Calu3 (cell line): ENCODE measurements at regions of chr14 and their contacts with region 1.

Region 1: DNA sequence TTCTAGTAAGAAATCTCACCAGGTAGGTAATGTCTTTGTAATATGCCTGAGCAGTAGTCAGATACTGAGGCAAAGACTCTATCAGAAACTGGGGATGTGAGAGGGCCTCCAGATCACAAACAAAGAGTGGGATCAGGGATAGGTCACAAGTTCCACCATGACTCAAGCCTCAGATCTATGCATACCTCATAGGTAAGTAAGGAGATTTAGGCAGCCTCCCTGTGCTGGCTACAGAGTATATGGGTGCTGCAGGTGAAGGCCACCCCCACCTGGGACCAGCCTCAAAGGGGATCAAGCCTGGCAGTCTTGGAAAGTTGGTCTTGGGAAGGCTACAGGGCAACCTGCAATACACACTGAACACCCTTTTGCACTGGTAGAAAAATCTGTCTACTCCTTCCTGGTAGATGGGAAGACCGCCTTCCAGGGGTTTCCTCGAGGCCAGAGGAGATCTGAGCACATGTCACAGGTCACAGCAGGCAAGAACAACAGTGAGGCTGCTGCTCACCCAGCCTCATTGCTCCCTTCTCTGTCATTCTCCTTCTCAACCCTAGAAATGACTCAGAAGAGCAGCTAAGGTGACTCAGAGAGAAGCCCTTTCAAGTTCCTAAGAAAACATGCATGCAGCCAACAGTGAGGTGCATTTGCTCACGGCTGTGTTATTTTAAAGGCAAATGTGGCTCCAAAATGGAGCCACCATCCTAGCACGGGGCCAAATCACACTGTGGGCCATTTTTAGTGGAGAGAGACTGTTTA is 143.4 kb upstream of the CDKN3 start:
- DNase-seq: peak; percentile 14
- H3K4me3 Mint-ChIP-seq: no peak overlapping the region
- H3K27ac Mint-ChIP-seq: no peak overlapping the region
- H3K4me1 Mint-ChIP-seq: peaks cover 50% of the 10 kb centered on the region
- H3K27me3 Mint-ChIP-seq: no peaks in the 10 kb centered on the region
- CTCF ChIP-seq: no peak

Region 2: GRCh38 chr14:54189748-54190354 is 63.5 kb before region 1 on chr14:
- CTCF ChIA-PET with region 1: no interaction called
- intact Hi-C with region 1: loop called (anchors 10 kb)
- DNase-seq: peak; percentile 23
- H3K4me3 Mint-ChIP-seq: no peak overlapping the region
- H3K27ac Mint-ChIP-seq: no peak overlapping the region
- H3K4me1 Mint-ChIP-seq: no peaks in the 10 kb centered on the region
- H3K27me3 Mint-ChIP-seq: no peaks in the 10 kb centered on the region
- CTCF ChIP-seq: no peak

Region 3: DNA sequence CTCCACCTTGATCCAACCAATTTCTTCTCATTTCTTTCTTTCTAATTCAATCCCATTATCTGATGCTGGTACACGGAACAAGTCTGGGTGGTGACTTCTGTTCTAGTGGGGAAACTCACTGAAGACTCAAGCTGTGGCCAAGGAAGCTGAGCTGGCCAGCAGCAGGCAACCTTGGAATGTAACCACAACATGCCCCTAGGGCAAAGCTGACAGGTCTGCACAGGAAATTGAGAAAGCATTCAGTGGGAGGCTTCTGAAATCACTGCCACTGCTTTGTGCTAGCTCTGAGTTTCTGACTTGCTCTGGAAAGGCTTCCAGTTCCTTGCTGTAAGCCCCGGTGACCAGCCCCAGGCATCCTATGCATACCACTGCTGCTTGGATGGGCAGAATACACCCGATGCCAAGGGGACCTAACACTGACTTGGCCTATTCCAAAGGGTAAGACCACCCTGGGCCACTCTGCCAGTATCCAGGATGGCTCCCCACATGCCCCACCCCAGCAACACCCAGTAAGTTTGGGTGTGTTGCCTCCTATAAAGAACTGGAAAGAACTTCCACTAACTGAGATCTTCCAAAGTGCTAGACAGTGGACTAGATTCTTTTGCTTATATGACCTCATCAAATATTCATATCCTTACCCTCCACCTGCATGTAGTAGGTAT is 58.9 kb after region 1 on chr14:
- CTCF ChIA-PET with region 1: interaction called, 5 read pairs
- intact Hi-C with region 1: loop called (anchors 5 kb)
- DNase-seq: peak; percentile 78
- H3K4me3 Mint-ChIP-seq: no peak overlapping the region
- H3K27ac Mint-ChIP-seq: no peak overlapping the region
- H3K4me1 Mint-ChIP-seq: peaks cover 17% of the 10 kb centered on the region
- H3K27me3 Mint-ChIP-seq: no peaks in the 10 kb centered on the region
- CTCF ChIP-seq: no peak